ENCODE measurements at regions of chr18 and their contacts with region 1.

Region 1: GRCh38 chr18:3665780-3666525 is 216.0 kb downstream of the TGIF1 start:
- DNase-seq: peak; percentile 87
- ATAC-seq: peak; percentile 88
- H3K4me3 ChIP-seq: peak overlapping the region; percentile 3 to 4; a peak in 2 of 4 replicates
- H3K27ac ChIP-seq: peak overlapping the region; percentile 100
- H3K4me1 ChIP-seq: peaks cover 56% of the 10 kb centered on the region
- H3K27me3 ChIP-seq: no peaks in the 10 kb centered on the region
- CTCF ChIP-seq: peak; percentile 92

Region 2: GRCh38 chr18:3447895-3448837 is 217.8 kb before region 1 on chr18:
- CTCF ChIA-PET with region 1: interaction called, 7 read pairs
- POLR2A ChIA-PET with region 1: interaction called, 23 read pairs
- in situ Hi-C with region 1: no loop called
- intact Hi-C with region 1: loop called (anchors 5 kb)
- DNase-seq: no peak
- ATAC-seq: peak; percentile 80
- H3K4me3 ChIP-seq: peak overlapping the region; percentile 94 to 97
- H3K27ac ChIP-seq: peak overlapping the region; percentile 98
- H3K4me1 ChIP-seq: peaks cover 33% of the 10 kb centered on the region
- H3K27me3 ChIP-seq: no peaks in the 10 kb centered on the region
- CTCF ChIP-seq: peak; percentile 25; the same call in 1 of the 2 replicates

Region 3: GRCh38 chr18:3593904-3594661 is 71.9 kb before region 1 on chr18:
- CTCF ChIA-PET with region 1: interaction called, 15 read pairs
- POLR2A ChIA-PET with region 1: interaction called, 17 read pairs
- in situ Hi-C with region 1: no loop called
- intact Hi-C with region 1: no loop called
- DNase-seq: peak; percentile 95
- ATAC-seq: peak; percentile 82
- H3K4me3 ChIP-seq: peak overlapping the region; percentile 50 to 86
- H3K27ac ChIP-seq: peak overlapping the region; percentile 96
- H3K4me1 ChIP-seq: peaks cover 73% of the 10 kb centered on the region
- H3K27me3 ChIP-seq: no peaks in the 10 kb centered on the region
- CTCF ChIP-seq: peak; percentile 96

Region 4: DNA sequence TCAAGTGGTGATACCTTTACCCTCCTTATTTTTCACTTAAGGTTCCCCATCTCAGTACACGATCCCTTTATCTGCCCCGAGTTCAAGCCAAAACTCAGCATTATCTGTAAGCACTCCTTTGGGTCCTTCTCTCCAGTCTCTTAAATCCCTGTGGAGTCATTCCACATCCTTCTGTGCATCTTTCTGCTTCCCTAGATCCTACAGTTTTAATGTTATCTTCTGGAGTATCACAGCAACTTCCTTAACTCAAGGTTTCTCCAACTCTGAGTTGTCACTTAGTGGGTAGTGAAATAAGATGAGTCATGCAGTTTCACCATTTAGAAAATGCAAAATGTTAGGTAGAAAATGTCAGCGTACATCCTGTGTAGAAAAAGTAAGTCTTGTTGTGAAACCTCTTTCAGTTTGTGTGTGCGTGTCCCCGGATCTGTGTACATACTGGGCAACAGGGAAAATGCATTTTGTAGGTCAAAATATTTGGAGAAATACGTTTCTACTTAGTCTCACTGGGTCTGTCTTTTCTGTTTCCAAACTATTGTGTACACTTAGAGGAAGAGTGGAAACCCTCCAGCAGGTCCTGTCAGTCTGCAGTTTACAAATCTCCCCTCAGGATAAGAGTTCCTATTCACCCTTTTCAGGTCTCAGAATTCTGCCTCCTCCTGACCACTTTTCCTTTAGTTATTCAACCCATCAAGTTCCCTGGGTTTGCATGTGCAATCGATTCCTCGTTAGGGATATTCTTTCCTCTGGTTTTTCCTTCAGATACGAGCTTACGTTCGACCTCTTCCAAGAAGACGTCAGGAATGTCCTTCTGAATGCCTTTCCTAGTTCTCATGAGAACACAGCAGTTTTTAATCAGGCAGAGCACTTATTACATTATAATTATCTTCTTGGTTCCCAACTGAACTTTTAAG is 61.2 kb before region 1 on chr18:
- CTCF ChIA-PET with region 1: interaction called, 9 read pairs
- POLR2A ChIA-PET with region 1: interaction called, 20 read pairs
- in situ Hi-C with region 1: no loop called
- intact Hi-C with region 1: loop called (anchors 2 kb)
- DNase-seq: peak; percentile 81
- ATAC-seq: peak; percentile 2; the same call in 1 of the 2 replicates
- H3K4me3 ChIP-seq: peak overlapping the region; percentile 57 to 72
- H3K27ac ChIP-seq: peak overlapping the region; percentile 100
- H3K4me1 ChIP-seq: peaks cover 51% of the 10 kb centered on the region
- H3K27me3 ChIP-seq: no peaks in the 10 kb centered on the region
- CTCF ChIP-seq: no peak

Region 5: GRCh38 chr18:3623769-3624545 is 42.0 kb before region 1 on chr18:
- CTCF ChIA-PET with region 1: no interaction called
- POLR2A ChIA-PET with region 1: interaction called, 13 read pairs
- in situ Hi-C with region 1: no loop called
- intact Hi-C with region 1: no loop called
- DNase-seq: peak; percentile 95
- ATAC-seq: peak; percentile 88
- H3K4me3 ChIP-seq: peak overlapping the region; percentile 2 to 26; a peak in 3 of 4 replicates
- H3K27ac ChIP-seq: peak overlapping the region; percentile 93
- H3K4me1 ChIP-seq: peaks cover 56% of the 10 kb centered on the region
- H3K27me3 ChIP-seq: no peaks in the 10 kb centered on the region
- CTCF ChIP-seq: no peak

Region 6: GRCh38 chr18:3652380-3653262 is 13.3 kb before region 1 on chr18:
- CTCF ChIA-PET with region 1: interaction called, 8 read pairs
- POLR2A ChIA-PET with region 1: interaction called, 21 read pairs
- in situ Hi-C with region 1: no loop called
- intact Hi-C with region 1: no loop called
- DNase-seq: peak; percentile 97
- ATAC-seq: peak; percentile 87
- H3K4me3 ChIP-seq: peak overlapping the region; percentile 43 to 53
- H3K27ac ChIP-seq: peak overlapping the region; percentile 100
- H3K4me1 ChIP-seq: peaks cover 76% of the 10 kb centered on the region
- H3K27me3 ChIP-seq: no peaks in the 10 kb centered on the region
- CTCF ChIP-seq: no peak

Region 7: GRCh38 chr18:3771121-3771971 is 105.4 kb after region 1 on chr18:
- CTCF ChIA-PET with region 1: interaction called, 3 read pairs
- POLR2A ChIA-PET with region 1: interaction called, 19 read pairs
- in situ Hi-C with region 1: no loop called
- intact Hi-C with region 1: no loop called
- DNase-seq: peak; percentile 38
- ATAC-seq: peak; percentile 100
- H3K4me3 ChIP-seq: peak overlapping the region; percentile 42 to 51
- H3K27ac ChIP-seq: peak overlapping the region; percentile 81
- H3K4me1 ChIP-seq: peaks cover 24% of the 10 kb centered on the region
- H3K27me3 ChIP-seq: no peaks in the 10 kb centered on the region
- CTCF ChIP-seq: peak; percentile 98

Region 8: DNA sequence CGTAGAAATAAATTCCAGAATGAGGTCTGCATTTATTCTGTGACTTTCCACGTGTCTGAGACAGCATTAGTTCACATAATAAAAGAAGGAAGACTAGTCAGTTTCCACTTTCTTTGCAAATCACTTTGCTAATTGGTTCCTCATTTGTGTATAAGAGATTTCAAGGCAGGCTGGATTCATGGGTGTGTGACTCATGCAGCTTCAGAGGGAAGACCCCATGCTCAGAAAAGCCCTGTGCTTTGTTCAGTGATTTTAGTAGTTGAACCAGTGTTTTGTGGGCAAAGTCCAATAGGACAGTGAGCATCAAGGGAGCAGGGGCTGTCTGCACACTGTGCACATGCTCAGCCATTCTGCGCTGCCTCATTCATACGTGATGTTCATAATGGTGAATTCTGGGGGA is 491.4 kb after region 1 on chr18:
- CTCF ChIA-PET with region 1: no interaction called
- POLR2A ChIA-PET with region 1: no interaction called
- in situ Hi-C with region 1: no loop called
- intact Hi-C with region 1: no loop called
- DNase-seq: no peak
- ATAC-seq: no peak
- H3K4me3 ChIP-seq: no peak overlapping the region
- H3K27ac ChIP-seq: no peak overlapping the region
- H3K4me1 ChIP-seq: no peaks in the 10 kb centered on the region
- H3K27me3 ChIP-seq: no peaks in the 10 kb centered on the region
- CTCF ChIP-seq: no peak